Right cardiac atrium (tissue), 5 donors: ENCODE measurements at regions of chr20 and their contacts with region 1.

Region 1: GRCh38 chr20:51639206-51639832 is 96.8 kb upstream of the NFATC2 start:
- DNase-seq: peak; percentile 59 to 89 (median 78)
- ATAC-seq: peak; percentile 76 to 85
- H3K4me3 ChIP-seq: no peak overlapping the region
- H3K27ac ChIP-seq: no peak overlapping the region
- H3K4me1 ChIP-seq: no peaks in the 10 kb centered on the region
- H3K27me3 ChIP-seq: no peaks in the 10 kb centered on the region

Region 2: GRCh38 chr20:51966291-51966971 is 327.1 kb after region 1 on chr20:
- intact Hi-C with region 1: loop called in 1 of 4 experiments (anchors 10 kb)
- DNase-seq: peak in 2 of 3 donors; percentile 25 to 61
- ATAC-seq: peak; percentile 62 to 78
- H3K4me3 ChIP-seq: no peak overlapping the region
- H3K27ac ChIP-seq: no peak overlapping the region
- H3K4me1 ChIP-seq: no peaks in the 10 kb centered on the region
- H3K27me3 ChIP-seq: peaks cover 2% of the 10 kb centered on the region

Region 3: GRCh38 chr20:52083627-52084232 is 444.4 kb after region 1 on chr20:
- intact Hi-C with region 1: loop called (anchors 10 kb)
- DNase-seq: peak in 2 of 3 donors; percentile 39 to 71
- ATAC-seq: peak; percentile 31 to 56
- H3K4me3 ChIP-seq: no peak overlapping the region
- H3K27ac ChIP-seq: no peak overlapping the region
- H3K4me1 ChIP-seq: no peaks in the 10 kb centered on the region
- H3K27me3 ChIP-seq: no peaks in the 10 kb centered on the region